ENCODE measurements at regions of chr2 and their contacts with region 1.

Region 1: GRCh38 chr2:136178941-136179601 is 61.1 kb upstream of the CXCR4 start:
- DNase-seq: no peak
- ATAC-seq: no peak
- H3K4me3 ChIP-seq: no peak overlapping the region
- H3K27ac ChIP-seq: no peak overlapping the region
- H3K4me1 ChIP-seq: no peaks in the 10 kb centered on the region
- H3K27me3 ChIP-seq: no peaks in the 10 kb centered on the region
- CTCF ChIP-seq: no peak
- EP300 ChIP-seq: no peak
- POLR2A ChIP-seq: no peak
- RAD21 ChIP-seq: no peak

Region 2: GRCh38 chr2:135212757-135213156 is 966.3 kb before region 1 on chr2:
- CTCF ChIA-PET with region 1: no interaction called
- POLR2A ChIA-PET with region 1: no interaction called
- RAD21 ChIA-PET with region 1: no interaction called
- SMC1A ChIA-PET with region 1: no interaction called
- in situ Hi-C with region 1: no loop called
- intact Hi-C with region 1: no loop called
- DNase-seq: no peak
- ATAC-seq: no peak
- H3K4me3 ChIP-seq: no peak overlapping the region
- H3K27ac ChIP-seq: no peak overlapping the region
- H3K4me1 ChIP-seq: no peaks in the 10 kb centered on the region
- H3K27me3 ChIP-seq: no peaks in the 10 kb centered on the region
- CTCF ChIP-seq: no peak
- EP300 ChIP-seq: no peak
- POLR2A ChIP-seq: no peak
- RAD21 ChIP-seq: no peak

Region 3: DNA sequence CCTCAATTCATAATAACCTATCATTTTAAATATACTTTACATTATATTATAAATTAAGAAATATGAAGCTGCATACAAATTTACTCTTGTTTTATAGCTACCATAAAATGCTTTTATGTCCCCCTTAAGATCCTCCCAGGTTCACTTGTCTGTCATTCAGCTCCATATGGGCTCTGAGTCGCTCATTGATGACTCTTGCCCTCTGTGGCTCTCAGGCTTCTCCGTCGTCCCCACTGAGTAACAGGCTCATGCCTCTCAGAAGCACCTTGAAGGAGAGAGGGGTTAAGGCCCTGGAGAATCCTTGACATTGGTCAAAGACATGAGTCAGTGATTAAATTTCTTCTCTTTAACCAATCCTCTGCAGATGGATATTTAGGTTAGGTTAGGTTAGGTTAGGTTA is 296.7 kb before region 1 on chr2:
- CTCF ChIA-PET with region 1: no interaction called
- POLR2A ChIA-PET with region 1: no interaction called
- RAD21 ChIA-PET with region 1: no interaction called
- SMC1A ChIA-PET with region 1: no interaction called
- in situ Hi-C with region 1: no loop called
- intact Hi-C with region 1: no loop called
- DNase-seq: no peak
- ATAC-seq: no peak
- H3K4me3 ChIP-seq: no peak overlapping the region
- H3K27ac ChIP-seq: no peak overlapping the region
- H3K4me1 ChIP-seq: no peaks in the 10 kb centered on the region
- H3K27me3 ChIP-seq: no peaks in the 10 kb centered on the region
- CTCF ChIP-seq: no peak
- EP300 ChIP-seq: no peak
- POLR2A ChIP-seq: no peak
- RAD21 ChIP-seq: no peak

Region 4: GRCh38 chr2:136191041-136191440 is 12.0 kb after region 1 on chr2:
- CTCF ChIA-PET with region 1: interaction called, 5 read pairs
- POLR2A ChIA-PET with region 1: interaction called, 4 read pairs
- RAD21 ChIA-PET with region 1: no interaction called
- SMC1A ChIA-PET with region 1: interaction called, 17 read pairs
- in situ Hi-C with region 1: no loop called
- intact Hi-C with region 1: no loop called
- DNase-seq: no peak
- ATAC-seq: no peak
- H3K4me3 ChIP-seq: no peak overlapping the region
- H3K27ac ChIP-seq: no peak overlapping the region
- H3K4me1 ChIP-seq: no peaks in the 10 kb centered on the region
- H3K27me3 ChIP-seq: no peaks in the 10 kb centered on the region; a peak in 2 of 4 replicates
- CTCF ChIP-seq: no peak
- EP300 ChIP-seq: no peak
- POLR2A ChIP-seq: no peak
- RAD21 ChIP-seq: no peak

Region 5: GRCh38 chr2:136246086-136246669 is 67.1 kb after region 1 on chr2:
- CTCF ChIA-PET with region 1: no interaction called
- POLR2A ChIA-PET with region 1: no interaction called
- RAD21 ChIA-PET with region 1: no interaction called
- SMC1A ChIA-PET with region 1: no interaction called
- in situ Hi-C with region 1: no loop called
- intact Hi-C with region 1: no loop called
- DNase-seq: peak; percentile 60
- ATAC-seq: peak; percentile 96
- H3K4me3 ChIP-seq: no peak overlapping the region
- H3K27ac ChIP-seq: no peak overlapping the region; the same call in 1 of the 2 replicates
- H3K4me1 ChIP-seq: peaks cover 3% of the 10 kb centered on the region; the same call in 1 of the 2 replicates
- H3K27me3 ChIP-seq: 0 out of 4 replicates have a peak, but pooled peaks cover 0 to 2% of the 10 kb centered on the region in 2 experiments
- CTCF ChIP-seq: no peak
- EP300 ChIP-seq: peak; percentile 78 to 87; a peak in 3 of 4 replicates
- POLR2A ChIP-seq: no peak
- RAD21 ChIP-seq: no peak

Region 6: DNA sequence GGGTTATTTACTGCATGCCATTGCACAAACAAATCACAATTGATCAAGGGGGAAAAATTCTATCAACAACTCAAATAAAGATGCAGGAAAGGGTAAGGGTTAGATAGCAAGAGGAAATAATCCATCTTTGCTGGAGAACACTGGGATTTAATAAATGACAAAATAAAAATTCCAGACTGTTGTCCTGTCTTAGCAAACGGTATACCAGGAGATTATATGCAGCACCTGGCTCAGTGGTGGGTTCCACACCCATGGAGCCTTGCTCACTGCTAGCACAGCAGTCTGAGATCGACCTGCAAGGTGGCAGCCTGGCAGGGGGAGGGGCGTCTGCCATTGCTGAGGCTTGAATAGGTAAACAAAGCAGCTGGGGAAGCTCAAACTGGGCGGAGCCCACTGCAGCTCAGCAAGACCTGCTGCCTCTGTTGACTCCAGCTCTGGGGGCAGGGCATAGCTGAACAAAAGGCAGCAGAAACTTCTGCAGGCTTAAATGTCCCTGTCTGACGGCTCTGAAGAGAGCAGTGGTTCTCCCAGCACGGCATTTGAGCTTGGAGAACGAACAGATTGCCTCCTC is 289.8 kb after region 1 on chr2:
- CTCF ChIA-PET with region 1: no interaction called
- POLR2A ChIA-PET with region 1: no interaction called
- RAD21 ChIA-PET with region 1: no interaction called
- SMC1A ChIA-PET with region 1: no interaction called
- in situ Hi-C with region 1: no loop called
- intact Hi-C with region 1: no loop called
- DNase-seq: no peak
- ATAC-seq: no peak
- H3K4me3 ChIP-seq: no peak overlapping the region
- H3K27ac ChIP-seq: no peak overlapping the region
- H3K4me1 ChIP-seq: no peaks in the 10 kb centered on the region
- H3K27me3 ChIP-seq: no peaks in the 10 kb centered on the region; a peak in 2 of 4 replicates
- CTCF ChIP-seq: no peak
- EP300 ChIP-seq: no peak
- POLR2A ChIP-seq: no peak
- RAD21 ChIP-seq: no peak

Measured in GM12878 (cell line).